Esophagus muscularis mucosa (tissue), 4 donors: ENCODE measurements at regions of chr4 and their contacts with region 1.

Region 1: GRCh38 chr4:54999003-54999402 is 126.4 kb downstream of the KDR start:
- DNase-seq: no peak
- H3K4me3 ChIP-seq: no peak overlapping the region
- H3K27ac ChIP-seq: no peak overlapping the region
- H3K4me1 ChIP-seq: peaks cover 0 to 32% (median 24%) of the 10 kb centered on the region in 4 donors
- H3K27me3 ChIP-seq: no peaks in the 10 kb centered on the region
- CTCF ChIP-seq: peak; percentile 59 to 77 (median 72)
- EP300 ChIP-seq: no peak
- POLR2A ChIP-seq: no peak

Region 2: DNA sequence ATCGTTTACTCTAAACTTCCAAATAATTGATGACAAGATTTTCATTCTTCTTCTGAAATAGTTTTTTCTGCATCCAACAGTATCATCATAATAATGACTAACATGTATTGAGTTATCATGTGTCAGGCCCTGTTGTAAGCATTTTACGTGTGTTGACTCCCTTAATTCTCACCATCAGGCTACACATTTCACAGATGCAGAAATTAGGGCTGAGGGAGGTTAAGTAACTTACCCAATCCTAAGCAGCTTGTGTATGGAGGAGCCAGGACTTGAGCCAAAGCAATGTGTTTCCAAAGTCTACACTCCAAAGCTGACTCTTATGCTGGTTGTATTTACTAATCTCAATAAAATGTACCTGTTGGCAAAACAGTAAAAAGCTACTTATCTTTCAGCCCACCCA is 137.6 kb after region 1 on chr4:
- intact Hi-C with region 1: no loop called
- DNase-seq: no peak
- H3K4me3 ChIP-seq: no peak overlapping the region
- H3K27ac ChIP-seq: no peak overlapping the region
- H3K4me1 ChIP-seq: no peaks in the 10 kb centered on the region
- H3K27me3 ChIP-seq: no peaks in the 10 kb centered on the region
- CTCF ChIP-seq: no peak
- EP300 ChIP-seq: no peak
- POLR2A ChIP-seq: no peak

Region 3: GRCh38 chr4:55157559-55158277 is 158.7 kb after region 1 on chr4:
- intact Hi-C with region 1: no loop called
- DNase-seq: no peak
- H3K4me3 ChIP-seq: peak overlapping the region; percentile 35 to 49 (median 42)
- H3K27ac ChIP-seq: no peak overlapping the region
- H3K4me1 ChIP-seq: peaks cover 0 to 8% (median 5%) of the 10 kb centered on the region in 4 donors
- H3K27me3 ChIP-seq: peaks cover 0 to 13% (median 4%) of the 10 kb centered on the region in 4 donors
- CTCF ChIP-seq: no peak
- EP300 ChIP-seq: no peak
- POLR2A ChIP-seq: no peak

Region 4: GRCh38 chr4:55554453-55555030 is 555.5 kb after region 1 on chr4:
- intact Hi-C with region 1: loop called (anchors 10 kb)
- DNase-seq: no peak
- H3K4me3 ChIP-seq: no peak overlapping the region
- H3K27ac ChIP-seq: no peak overlapping the region
- H3K4me1 ChIP-seq: peaks cover 0 to 15% (median 5%) of the 10 kb centered on the region in 4 donors
- H3K27me3 ChIP-seq: no peaks in the 10 kb centered on the region
- CTCF ChIP-seq: peak; percentile 41 to 53 (median 42)
- EP300 ChIP-seq: no peak
- POLR2A ChIP-seq: no peak